Ovary (tissue), 10 donors: ENCODE measurements at regions of chr22 and their contacts with region 1.

Region 1: GRCh38 chr22:30245985-30246901 is at the start of gene LIF:
- DNase-seq: peak in 1 of 5 donors; percentile 52
- H3K4me3 ChIP-seq: peak within 1 kb of the TSS; percentile 42
- H3K27ac ChIP-seq: no peak within 1 kb of the TSS
- H3K4me1 ChIP-seq: peaks cover 6% of the 10 kb centered on the region
- H3K27me3 ChIP-seq: no peaks in the 10 kb centered on the region
- CTCF ChIP-seq: peak in 2 of 3 donors; percentile 10 to 33
- EP300 ChIP-seq: no peak
- POLR2A ChIP-seq: no peak
- total RNA-seq, gene LIF: 0.35 to 8.3 (median 1.9) TPM

Region 2: DNA sequence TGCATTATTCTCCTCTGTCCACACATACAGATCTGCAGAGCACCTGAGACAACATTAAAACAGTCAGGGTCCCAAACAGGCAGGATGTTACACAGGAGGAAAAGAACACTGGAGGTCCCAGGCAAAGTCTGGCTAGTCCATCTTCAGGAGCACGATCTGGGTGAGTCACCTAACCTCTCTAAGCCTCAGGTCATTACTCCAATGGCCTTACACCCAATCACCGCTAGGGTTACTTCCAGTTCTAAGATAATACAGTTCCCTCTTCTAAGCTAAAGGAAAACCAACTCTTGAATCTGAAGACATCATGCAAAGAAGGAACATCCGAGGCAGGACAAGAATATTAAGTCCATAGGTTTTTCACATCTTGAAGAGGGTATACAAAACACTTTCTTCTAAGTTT is 432.7 kb before region 1 on chr22:
- intact Hi-C with region 1: no loop called
- DNase-seq: no peak
- H3K4me3 ChIP-seq: no peak overlapping the region
- H3K27ac ChIP-seq: no peak overlapping the region
- H3K4me1 ChIP-seq: no peaks in the 10 kb centered on the region
- H3K27me3 ChIP-seq: no peaks in the 10 kb centered on the region
- CTCF ChIP-seq: no peak
- EP300 ChIP-seq: no peak
- POLR2A ChIP-seq: no peak

Region 3: DNA sequence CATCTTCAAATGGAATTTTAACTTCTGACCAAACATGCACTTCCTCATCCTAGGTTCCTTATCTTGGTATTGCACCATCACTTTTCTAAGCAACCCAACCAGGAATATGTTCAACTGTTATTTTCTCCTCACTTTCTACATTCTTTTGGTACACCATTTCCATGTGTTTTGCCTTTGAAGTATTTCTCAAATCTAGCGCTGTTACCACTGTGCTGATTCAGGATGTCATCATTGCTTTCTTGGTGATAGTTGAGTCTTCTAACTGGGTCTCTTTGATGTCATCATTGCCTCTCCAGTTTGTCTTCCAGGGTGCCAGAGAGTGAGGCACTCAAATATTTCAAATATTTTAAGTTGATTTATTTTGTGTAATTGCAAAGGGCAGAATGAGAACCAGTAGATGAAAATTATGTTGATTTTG is 118.5 kb before region 1 on chr22:
- intact Hi-C with region 1: no loop called
- DNase-seq: no peak
- H3K4me3 ChIP-seq: no peak overlapping the region
- H3K27ac ChIP-seq: no peak overlapping the region
- H3K4me1 ChIP-seq: no peaks in the 10 kb centered on the region
- H3K27me3 ChIP-seq: no peaks in the 10 kb centered on the region
- CTCF ChIP-seq: no peak
- EP300 ChIP-seq: no peak
- POLR2A ChIP-seq: no peak

Region 4: DNA sequence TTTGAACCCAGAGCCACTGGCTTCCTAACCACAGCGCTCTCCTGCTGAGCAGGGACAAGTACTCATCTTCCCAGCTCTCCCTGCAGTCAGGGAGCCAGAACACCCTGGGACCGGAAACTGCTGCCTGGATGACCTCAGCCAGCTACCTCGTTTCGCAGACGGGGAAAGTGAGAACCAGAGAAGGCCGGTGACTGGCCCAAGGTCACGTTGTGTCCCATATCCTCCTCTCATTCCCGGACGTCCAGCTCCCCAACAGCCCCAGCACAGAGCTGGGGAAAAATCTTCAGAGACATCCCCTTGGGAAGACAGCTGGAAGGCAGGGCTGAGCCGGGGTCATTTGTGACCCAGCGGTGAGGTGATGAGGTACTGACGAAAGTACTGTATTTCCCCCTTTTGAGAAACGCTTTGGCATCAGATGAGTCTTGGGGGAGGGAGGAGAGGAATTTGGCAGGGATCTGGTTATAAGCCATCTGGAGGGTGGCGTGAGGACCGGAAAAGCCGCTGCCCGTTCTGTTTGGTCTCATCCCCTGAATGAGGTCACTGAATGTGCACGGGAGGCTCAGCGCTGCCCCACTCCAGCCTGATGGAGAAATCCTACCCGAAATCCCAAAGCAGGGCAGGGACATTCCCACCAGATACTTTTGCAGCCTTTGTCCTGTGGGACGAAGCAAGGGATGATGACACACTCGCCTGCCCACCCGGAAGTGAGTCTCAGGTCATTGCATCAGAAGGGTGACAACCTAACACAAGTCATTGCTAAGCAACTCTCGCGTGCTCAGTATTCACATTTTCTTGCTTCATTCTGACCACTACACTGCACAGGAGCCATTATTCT is 40.7 kb before region 1 on chr22:
- intact Hi-C with region 1: loop called in 1 of 4 experiments (anchors 5 kb)
- DNase-seq: peak in 3 of 5 donors; percentile 38 to 59 (median 57)
- H3K4me3 ChIP-seq: no peak overlapping the region
- H3K27ac ChIP-seq: peak overlapping the region in 1 of 2 donors; percentile 56
- H3K4me1 ChIP-seq: peaks cover 27% of the 10 kb centered on the region
- H3K27me3 ChIP-seq: no peaks in the 10 kb centered on the region
- CTCF ChIP-seq: no peak
- EP300 ChIP-seq: no peak
- POLR2A ChIP-seq: no peak